Right ventricle myocardium superior (tissue), 1 donor: ENCODE measurements at regions of chr6 and their contacts with region 1.

Region 1: GRCh38 chr6:28225056-28225834 is at the start of gene ZSCAN9:
- DNase-seq: peak; percentile 91
- ATAC-seq: peak; percentile 98
- total RNA-seq, gene ZSCAN9: 8.2 TPM

Region 2: DNA sequence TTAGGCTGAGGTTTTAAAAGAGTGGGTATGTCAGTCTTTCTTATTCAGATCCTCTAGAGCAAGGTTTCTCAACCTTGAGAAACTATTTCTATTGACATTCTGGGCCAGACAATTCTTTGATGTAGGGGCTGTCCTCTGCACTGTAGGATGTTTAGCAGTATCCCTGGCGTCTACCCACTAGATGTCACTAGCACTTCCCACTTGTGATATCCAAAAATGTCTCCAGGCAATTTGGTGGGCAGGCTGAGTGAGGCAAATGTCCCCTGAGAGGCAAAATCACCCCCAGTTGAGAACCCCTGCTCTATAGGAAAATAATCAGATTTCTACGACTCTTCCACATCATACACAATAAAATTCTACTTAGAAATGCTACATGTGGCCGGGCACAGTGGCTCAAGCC is 91.2 kb before region 1 on chr6:
- intact Hi-C with region 1: loop called (anchors 5 kb)
- DNase-seq: no peak
- ATAC-seq: no peak

Region 3: GRCh38 chr6:28355743-28356665 is 130.8 kb after region 1 on chr6:
- intact Hi-C with region 1: loop called (anchors 10 kb)
- DNase-seq: peak; percentile 78
- ATAC-seq: peak; percentile 96